ENCODE measurements at regions of chr18 and their contacts with region 1.

Region 1: GRCh38 chr18:32439802-32440201 is 30.9 kb downstream of the GAREM1 start:
- DNase-seq: peak; percentile 34
- H3K4me3 Mint-ChIP-seq: no peak overlapping the region
- H3K27ac Mint-ChIP-seq: no peak overlapping the region
- H3K4me1 Mint-ChIP-seq: peaks cover 35% of the 10 kb centered on the region
- H3K27me3 Mint-ChIP-seq: no peaks in the 10 kb centered on the region
- CTCF ChIP-seq: peak; percentile 12

Region 2: GRCh38 chr18:32393407-32393806 is 46.4 kb before region 1 on chr18:
- CTCF ChIA-PET with region 1: no interaction called
- POLR2A ChIA-PET with region 1: no interaction called
- intact Hi-C with region 1: no loop called
- DNase-seq: no peak
- H3K4me3 Mint-ChIP-seq: no peak overlapping the region
- H3K27ac Mint-ChIP-seq: no peak overlapping the region
- H3K4me1 Mint-ChIP-seq: peaks cover 6% of the 10 kb centered on the region
- H3K27me3 Mint-ChIP-seq: no peaks in the 10 kb centered on the region
- CTCF ChIP-seq: no peak

Region 3: DNA sequence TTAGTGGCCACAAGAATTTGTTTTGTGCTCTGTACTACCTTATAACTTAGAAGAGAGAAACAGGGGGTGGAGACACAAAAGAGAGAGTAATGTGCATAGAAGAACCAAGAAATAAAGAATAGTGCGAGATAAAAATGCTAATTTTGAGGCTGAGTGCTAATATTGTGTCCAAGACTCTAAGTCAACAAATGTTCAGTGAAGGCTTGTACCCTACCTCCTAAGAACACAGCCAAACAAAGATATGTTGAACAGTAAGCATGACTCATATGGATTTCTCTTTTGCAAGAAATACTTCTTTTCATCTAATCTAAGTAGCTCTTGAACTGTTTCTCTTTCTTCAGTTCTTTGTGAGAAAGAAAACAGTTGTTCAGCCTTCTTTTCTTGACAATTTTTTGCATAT is 14.3 kb before region 1 on chr18:
- CTCF ChIA-PET with region 1: interaction called, 3 read pairs
- POLR2A ChIA-PET with region 1: interaction called, 13 read pairs
- intact Hi-C with region 1: no loop called
- DNase-seq: peak; percentile 62
- H3K4me3 Mint-ChIP-seq: peak overlapping the region; percentile 13
- H3K27ac Mint-ChIP-seq: peak overlapping the region; percentile 82
- H3K4me1 Mint-ChIP-seq: peaks cover 26% of the 10 kb centered on the region
- H3K27me3 Mint-ChIP-seq: no peaks in the 10 kb centered on the region
- CTCF ChIP-seq: no peak

Region 4: GRCh38 chr18:32454593-32454992 is 14.8 kb after region 1 on chr18:
- CTCF ChIA-PET with region 1: interaction called, 14 read pairs
- POLR2A ChIA-PET with region 1: interaction called, 4 read pairs
- intact Hi-C with region 1: no loop called
- DNase-seq: peak; percentile 30
- H3K4me3 Mint-ChIP-seq: no peak overlapping the region
- H3K27ac Mint-ChIP-seq: peak overlapping the region; percentile 85
- H3K4me1 Mint-ChIP-seq: peaks cover 43% of the 10 kb centered on the region
- H3K27me3 Mint-ChIP-seq: no peaks in the 10 kb centered on the region
- CTCF ChIP-seq: no peak

Region 5: GRCh38 chr18:32480581-32480980 is 40.8 kb after region 1 on chr18:
- CTCF ChIA-PET with region 1: no interaction called
- POLR2A ChIA-PET with region 1: no interaction called
- intact Hi-C with region 1: no loop called
- DNase-seq: no peak
- H3K4me3 Mint-ChIP-seq: no peak overlapping the region
- H3K27ac Mint-ChIP-seq: no peak overlapping the region
- H3K4me1 Mint-ChIP-seq: no peaks in the 10 kb centered on the region
- H3K27me3 Mint-ChIP-seq: peaks cover 11% of the 10 kb centered on the region
- CTCF ChIP-seq: no peak

Measured in MCF 10A (cell line).